K562 (cell line): ENCODE measurements at regions of chr1 and their contacts with region 1.

Region 1: DNA sequence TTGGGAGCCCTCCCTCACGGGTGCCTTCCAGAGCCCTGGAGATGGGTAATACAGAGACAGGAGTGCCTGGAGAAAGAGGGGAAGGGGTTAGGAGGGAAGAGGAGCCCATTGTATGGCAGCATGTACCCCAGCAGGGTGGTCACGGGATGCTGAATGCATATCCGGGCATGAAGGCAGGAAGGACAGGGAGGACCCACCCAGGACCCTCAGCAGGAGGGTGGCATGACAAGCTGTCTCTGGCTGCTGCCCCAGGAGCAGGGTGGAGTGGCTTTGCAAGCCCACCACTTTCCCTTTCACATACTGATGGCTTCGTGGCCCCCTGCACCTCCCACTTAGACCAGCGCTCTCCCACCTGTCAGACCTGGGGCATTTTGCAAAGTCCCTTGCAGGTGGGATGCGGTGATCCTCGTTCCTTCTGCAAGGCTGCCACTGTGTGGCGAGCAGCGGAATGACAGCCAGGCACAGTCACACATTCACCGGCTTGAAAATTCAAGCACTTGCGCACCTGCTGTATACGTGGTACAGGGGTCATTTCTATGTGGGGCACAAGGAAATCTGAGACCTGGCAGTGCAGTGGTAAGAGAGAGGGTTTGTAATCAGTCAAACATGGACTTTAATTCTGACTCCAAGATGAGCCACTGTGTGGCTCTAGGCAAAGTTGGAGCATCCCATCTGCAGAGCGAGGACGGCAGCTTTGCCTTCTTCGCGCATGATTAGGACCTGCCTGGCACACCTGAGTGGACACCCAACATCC is 53.2 kb upstream of the TMEM51 start:
- DNase-seq: peak; percentile 64 to 73 (median 71)
- ATAC-seq: peak; percentile 93
- H3K4me3 ChIP-seq: no peak overlapping the region
- H3K27ac ChIP-seq: no peak overlapping the region
- H3K4me1 ChIP-seq: peaks cover 0 to 2% of the 10 kb centered on the region in 2 experiments; a peak in 1 of 5 replicates
- H3K27me3 ChIP-seq: peaks cover 13 to 65% of the 10 kb centered on the region in 2 experiments; a peak in 4 of 5 replicates
- CTCF ChIP-seq: peak; percentile 86 to 99 (median 93)
- EP300 ChIP-seq: no peak
- POLR2A ChIP-seq: no peak
- RAD21 ChIP-seq: peak; percentile 81 to 98

Region 2: GRCh38 chr1:13965770-13966398 is 1134.4 kb before region 1 on chr1:
- CTCF ChIA-PET with region 1: no interaction called
- POLR2A ChIA-PET with region 1: no interaction called
- in situ Hi-C with region 1: no loop called
- intact Hi-C with region 1: loop called (anchors 5 kb)
- DNase-seq: peak; percentile 45 to 61 (median 52)
- ATAC-seq: peak; percentile 88
- H3K4me3 ChIP-seq: no peak overlapping the region
- H3K27ac ChIP-seq: no peak overlapping the region
- H3K4me1 ChIP-seq: no peaks in the 10 kb centered on the region
- H3K27me3 ChIP-seq: no peaks in the 10 kb centered on the region
- CTCF ChIP-seq: peak; percentile 68 to 77 (median 71)
- EP300 ChIP-seq: no peak
- POLR2A ChIP-seq: no peak
- RAD21 ChIP-seq: peak; percentile 42 to 82; a peak in 3 of 4 replicates

Region 3: DNA sequence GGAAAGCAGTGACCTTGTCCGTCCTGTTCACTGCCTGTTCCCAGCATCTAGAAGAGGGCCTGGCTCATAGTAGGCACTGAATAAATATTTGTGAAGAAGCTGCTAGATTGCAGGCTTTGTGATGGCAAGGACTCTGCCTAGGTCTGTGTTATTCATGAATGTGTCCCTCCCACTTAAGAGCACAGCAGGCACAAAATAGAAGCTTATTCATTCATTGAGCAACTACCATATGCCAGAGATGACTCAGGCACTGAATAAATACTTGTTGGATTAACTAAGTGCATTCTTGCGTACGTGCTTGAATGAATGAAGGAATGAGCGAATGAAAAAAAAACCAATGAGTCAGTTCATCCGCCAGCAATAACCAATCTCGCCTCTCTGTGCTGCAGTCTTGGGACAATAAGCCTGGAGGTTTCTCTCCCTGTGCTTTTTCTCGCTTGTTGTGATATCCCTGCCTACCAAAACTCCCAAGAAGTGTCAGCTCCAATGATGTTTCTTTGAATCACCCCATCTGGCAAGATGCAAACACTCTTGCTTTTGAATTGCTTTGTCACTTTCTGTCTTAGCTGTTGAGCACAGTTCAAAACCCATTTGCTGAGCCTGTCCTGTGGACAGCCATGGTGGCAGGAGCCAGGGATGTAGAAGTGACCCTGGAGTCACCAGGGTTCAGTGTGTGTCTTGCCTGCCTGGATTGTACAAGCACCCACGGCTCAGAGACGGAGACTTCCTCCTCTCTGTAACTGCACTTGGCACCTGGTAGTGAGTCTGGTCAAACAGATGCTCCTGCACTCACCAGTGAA is 357.9 kb before region 1 on chr1:
- CTCF ChIA-PET with region 1: no interaction called
- POLR2A ChIA-PET with region 1: no interaction called
- in situ Hi-C with region 1: no loop called
- intact Hi-C with region 1: loop called (anchors 10 kb)
- DNase-seq: no peak
- ATAC-seq: no peak
- H3K4me3 ChIP-seq: no peak overlapping the region
- H3K27ac ChIP-seq: no peak overlapping the region
- H3K4me1 ChIP-seq: no peaks in the 10 kb centered on the region; a peak in 1 of 5 replicates
- H3K27me3 ChIP-seq: peaks cover 63 to 65% of the 10 kb centered on the region in 2 experiments
- CTCF ChIP-seq: no peak
- EP300 ChIP-seq: no peak
- POLR2A ChIP-seq: no peak
- RAD21 ChIP-seq: no peak

Region 4: DNA sequence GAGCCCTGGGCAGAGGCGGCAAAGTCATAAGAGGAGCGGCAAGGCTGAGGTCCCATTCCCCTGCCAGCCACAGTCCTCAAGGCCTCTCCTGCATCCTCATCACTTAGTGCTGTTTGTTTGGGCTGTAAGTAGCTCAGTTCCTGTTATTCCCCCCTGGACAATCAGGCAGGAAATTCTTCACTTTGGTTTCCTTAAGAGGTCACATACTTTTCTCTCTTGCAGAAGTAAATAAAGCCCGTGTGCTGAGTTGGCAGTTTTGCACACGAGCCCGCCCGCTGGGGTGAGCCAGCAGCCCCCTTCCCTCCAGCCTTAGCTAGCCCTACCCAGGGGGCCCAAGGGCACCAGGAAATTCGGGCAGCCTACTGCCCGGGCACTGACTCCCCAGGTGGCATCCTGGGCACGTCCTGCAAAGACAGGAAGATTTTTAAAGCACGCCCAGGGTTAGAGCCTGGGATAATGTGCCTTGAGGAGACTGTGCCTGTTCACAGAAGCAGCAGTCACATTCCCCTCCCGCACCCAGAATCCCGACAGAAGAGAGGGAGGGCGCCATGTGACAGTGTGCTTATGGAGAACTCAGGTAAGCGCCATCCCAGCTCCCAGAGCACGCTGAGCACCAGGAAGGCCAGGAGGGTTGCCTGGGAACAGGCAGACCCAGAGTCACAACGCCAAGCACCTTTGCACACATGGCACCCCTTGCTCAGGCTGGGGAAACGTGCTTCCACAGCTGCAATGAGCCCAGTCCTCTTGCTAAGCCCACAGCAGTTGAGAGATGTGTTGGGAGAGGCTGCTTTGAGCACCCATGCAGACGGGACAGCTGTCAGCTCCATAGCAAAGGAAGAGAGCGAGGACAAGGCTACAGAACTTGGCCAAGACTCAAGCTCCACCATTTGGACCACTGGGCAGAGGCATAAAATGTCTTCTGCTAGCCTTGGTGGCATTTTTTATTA is 91.2 kb before region 1 on chr1:
- CTCF ChIA-PET with region 1: no interaction called
- POLR2A ChIA-PET with region 1: no interaction called
- in situ Hi-C with region 1: no loop called
- intact Hi-C with region 1: no loop called
- DNase-seq: no peak
- ATAC-seq: no peak
- H3K4me3 ChIP-seq: no peak overlapping the region
- H3K27ac ChIP-seq: no peak overlapping the region
- H3K4me1 ChIP-seq: peaks cover 6 to 11% of the 10 kb centered on the region in 2 experiments; a peak in 2 of 5 replicates
- H3K27me3 ChIP-seq: no peaks in the 10 kb centered on the region
- CTCF ChIP-seq: no peak
- EP300 ChIP-seq: no peak
- POLR2A ChIP-seq: no peak
- RAD21 ChIP-seq: no peak